Activated CD8-positive, alpha-beta T cell treated with anti-CD3 and anti-CD28 coated beads, Interleukin-2, amount 10 ng/mL, durations not matched to agents 7 days and 5 days (primary cell): ENCODE measurements at regions of chr3 and their contacts with region 1.

Region 1: GRCh38 chr3:151282921-151283320 is 4.6 kb upstream of the P2RY14 start:
- DNase-seq: no peak
- ATAC-seq: peak; percentile 62
- H3K4me3 Mint-ChIP-seq: no peak overlapping the region
- H3K27ac Mint-ChIP-seq: no peak overlapping the region
- H3K4me1 Mint-ChIP-seq: peaks cover 51% of the 10 kb centered on the region
- H3K27me3 Mint-ChIP-seq: no peaks in the 10 kb centered on the region

Region 2: GRCh38 chr3:151219056-151219455 is 63.9 kb before region 1 on chr3:
- CTCF ChIA-PET with region 1: interaction called, 408 read pairs
- POLR2A ChIA-PET with region 1: no interaction called
- DNase-seq: no peak
- ATAC-seq: no peak
- H3K4me3 Mint-ChIP-seq: no peak overlapping the region
- H3K27ac Mint-ChIP-seq: no peak overlapping the region
- H3K4me1 Mint-ChIP-seq: peaks cover 4% of the 10 kb centered on the region
- H3K27me3 Mint-ChIP-seq: no peaks in the 10 kb centered on the region

Region 3: DNA sequence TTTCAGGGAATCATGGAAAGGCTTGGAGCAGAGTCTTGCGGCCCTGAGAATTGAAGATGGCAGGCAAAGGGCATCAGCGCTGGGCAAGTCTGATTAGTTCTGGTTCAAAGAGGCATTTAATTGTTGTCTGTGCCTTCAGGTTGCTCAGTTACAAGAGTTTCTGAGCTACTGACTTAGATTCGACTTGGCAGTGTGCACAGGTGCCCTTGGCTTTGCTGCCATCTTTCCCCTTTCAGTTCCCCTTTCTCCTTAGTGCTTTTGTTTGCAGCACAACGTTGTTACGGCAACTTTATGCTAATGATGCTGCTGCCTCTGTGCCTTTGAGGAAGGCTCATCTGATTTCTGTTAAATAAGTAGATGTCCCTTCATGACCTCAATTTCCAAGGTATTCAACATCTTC is 17.1 kb before region 1 on chr3:
- CTCF ChIA-PET with region 1: interaction called, 40 read pairs
- POLR2A ChIA-PET with region 1: interaction called, 4 read pairs
- DNase-seq: no peak
- ATAC-seq: no peak
- H3K4me3 Mint-ChIP-seq: no peak overlapping the region
- H3K27ac Mint-ChIP-seq: no peak overlapping the region
- H3K4me1 Mint-ChIP-seq: peaks cover 38% of the 10 kb centered on the region
- H3K27me3 Mint-ChIP-seq: no peaks in the 10 kb centered on the region